Activated CD4-positive, alpha-beta memory T cell treated with anti-CD3 and anti-CD28 coated beads, Interleukin-2, amount 10 ng/mL, durations not matched to agents 7 days and 5 days (primary cell): ENCODE measurements at regions of chr3 and their contacts with region 1.

Region 1: DNA sequence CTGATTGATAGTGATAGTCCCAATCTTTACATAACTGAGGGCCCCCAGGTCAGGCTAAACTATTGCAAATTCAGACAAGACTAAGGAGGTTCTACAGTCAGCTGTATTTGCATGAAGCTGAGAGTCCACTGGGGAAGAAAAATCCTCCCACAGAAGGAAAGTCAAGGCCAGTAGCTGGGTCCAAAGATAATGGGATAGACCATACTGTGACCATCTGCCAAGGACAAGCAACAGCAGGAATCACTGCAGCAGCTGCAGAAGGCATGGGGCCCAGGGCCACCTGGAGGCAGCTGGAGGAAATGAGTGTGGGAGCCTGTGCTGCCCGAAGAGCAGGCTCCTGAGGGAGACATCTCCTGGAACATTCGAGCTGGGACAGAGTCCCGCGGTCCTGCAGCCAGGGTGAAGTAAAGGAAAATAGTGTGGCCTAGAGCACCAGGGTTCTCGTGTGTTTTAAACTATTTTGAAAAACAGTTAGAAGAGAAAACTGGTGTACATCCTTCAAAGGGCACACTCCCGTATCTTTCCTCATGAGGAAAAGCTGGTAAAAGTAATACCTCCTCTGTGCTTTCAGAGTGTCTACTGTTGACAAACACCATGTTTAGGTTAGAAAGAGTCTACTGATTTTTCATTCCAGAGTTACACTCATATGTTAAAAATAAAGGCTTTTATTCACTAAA is 13.2 kb upstream of the TMEM212 start:
- DNase-seq: peak; percentile 22
- H3K4me3 Mint-ChIP-seq: no peak overlapping the region
- H3K27ac Mint-ChIP-seq: no peak overlapping the region
- H3K4me1 Mint-ChIP-seq: peaks cover 12% of the 10 kb centered on the region
- H3K27me3 Mint-ChIP-seq: peaks cover 12% of the 10 kb centered on the region

Region 2: GRCh38 chr3:171809821-171810628 is 20.0 kb before region 1 on chr3 and contains the start of gene PLD1:
- CTCF ChIA-PET with region 1: interaction called, 14 read pairs
- POLR2A ChIA-PET with region 1: interaction called, 4 read pairs
- DNase-seq: peak; percentile 72
- H3K4me3 Mint-ChIP-seq: peak within 1 kb of the TSS; percentile 79
- H3K27ac Mint-ChIP-seq: peak within 1 kb of the TSS; percentile 49
- H3K4me1 Mint-ChIP-seq: peaks cover 45% of the 10 kb centered on the region
- H3K27me3 Mint-ChIP-seq: peaks cover 33% of the 10 kb centered on the region
- total RNA-seq, gene PLD1: 3.1 to 4.1 TPM

Region 3: GRCh38 chr3:172082269-172082668 is 252.3 kb after region 1 on chr3:
- CTCF ChIA-PET with region 1: no interaction called
- POLR2A ChIA-PET with region 1: no interaction called
- DNase-seq: no peak
- H3K4me3 Mint-ChIP-seq: no peak overlapping the region
- H3K27ac Mint-ChIP-seq: no peak overlapping the region
- H3K4me1 Mint-ChIP-seq: peaks cover 26% of the 10 kb centered on the region
- H3K27me3 Mint-ChIP-seq: no peaks in the 10 kb centered on the region